ENCODE measurements at regions of chr6 and their contacts with region 1.

Region 1: DNA sequence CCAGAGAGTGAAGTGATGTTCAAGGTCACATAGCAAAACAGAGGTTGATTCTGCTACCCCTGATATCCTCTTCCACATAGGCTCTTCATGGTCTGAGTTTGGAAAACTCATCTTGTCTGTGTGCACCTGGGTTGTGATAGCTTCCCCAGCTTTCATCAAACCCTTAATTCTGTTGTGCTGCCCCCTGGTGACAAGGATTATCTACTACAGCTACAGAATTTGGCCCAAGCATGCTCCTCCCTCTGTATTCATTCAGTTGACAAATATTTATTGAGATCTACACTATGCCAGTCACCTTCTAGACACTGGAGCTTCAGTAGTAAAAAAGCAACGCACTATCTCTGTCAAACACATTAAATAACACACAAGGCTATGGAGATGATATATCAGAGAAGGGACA is 50.4 kb downstream of the SMPDL3A start:
- DNase-seq: peak; percentile 79
- H3K4me3 Mint-ChIP-seq: no peak overlapping the region
- H3K27ac Mint-ChIP-seq: no peak overlapping the region
- H3K4me1 Mint-ChIP-seq: peaks cover 7% of the 10 kb centered on the region
- H3K27me3 Mint-ChIP-seq: no peaks in the 10 kb centered on the region
- CTCF ChIP-seq: peak; percentile 54

Region 2: GRCh38 chr6:122372647-122373046 is 466.8 kb before region 1 on chr6:
- CTCF ChIA-PET with region 1: no interaction called
- POLR2A ChIA-PET with region 1: no interaction called
- intact Hi-C with region 1: no loop called
- DNase-seq: no peak
- H3K4me3 Mint-ChIP-seq: no peak overlapping the region
- H3K27ac Mint-ChIP-seq: no peak overlapping the region
- H3K4me1 Mint-ChIP-seq: peaks cover 9% of the 10 kb centered on the region
- H3K27me3 Mint-ChIP-seq: peaks cover 40% of the 10 kb centered on the region
- CTCF ChIP-seq: peak; percentile 32

Region 3: DNA sequence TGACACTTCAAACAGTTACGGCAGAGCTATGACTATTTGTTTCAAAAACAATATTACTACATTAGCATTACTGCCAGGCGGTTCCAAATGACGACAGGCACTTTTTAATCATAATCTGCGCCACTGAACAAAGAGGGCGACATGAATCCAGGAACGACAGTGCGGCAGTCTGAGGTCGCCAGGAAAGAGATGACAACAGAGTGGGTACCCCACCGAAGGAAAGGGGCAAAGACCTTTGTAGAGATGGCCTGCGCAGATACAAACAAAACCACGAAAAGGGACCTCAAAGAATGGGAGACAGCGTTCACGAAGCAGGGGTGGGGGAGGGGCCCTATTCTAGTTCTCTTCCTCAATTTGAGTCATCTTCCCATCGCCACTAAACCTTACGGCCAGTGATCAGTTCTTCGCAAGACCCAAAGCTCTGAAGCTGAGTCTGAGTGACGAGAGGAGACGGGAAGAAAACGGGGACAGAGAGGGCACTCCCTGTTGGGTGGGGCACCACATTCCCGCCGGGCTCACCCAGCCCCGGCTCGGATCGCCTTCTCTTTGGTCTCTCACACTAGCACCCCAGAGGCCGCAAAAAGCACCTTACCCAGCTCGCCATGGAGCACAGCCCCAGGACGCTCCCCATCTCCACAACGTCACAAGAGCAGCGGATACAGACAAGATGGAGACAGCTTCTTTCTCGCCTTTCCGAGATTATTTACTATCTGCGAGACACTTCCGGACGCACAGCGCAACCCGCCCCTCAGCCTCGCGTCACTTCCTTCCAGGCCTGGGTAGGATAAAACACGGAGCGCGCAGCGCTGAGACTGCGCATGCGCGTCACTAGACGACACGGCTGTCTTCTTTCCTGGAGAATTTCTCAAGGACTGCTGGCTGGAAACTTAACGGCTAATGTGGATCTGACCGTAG is 368.1 kb before region 1 on chr6 and contains the start of gene SERINC1:
- CTCF ChIA-PET with region 1: no interaction called
- POLR2A ChIA-PET with region 1: no interaction called
- intact Hi-C with region 1: loop called (anchors 5 kb)
- DNase-seq: peak; percentile 94
- H3K4me3 Mint-ChIP-seq: peak within 1 kb of the TSS; percentile 98
- H3K27ac Mint-ChIP-seq: peak within 1 kb of the TSS; percentile 100
- H3K4me1 Mint-ChIP-seq: peaks cover 26% of the 10 kb centered on the region
- H3K27me3 Mint-ChIP-seq: no peaks in the 10 kb centered on the region
- CTCF ChIP-seq: no peak
- total RNA-seq, gene SERINC1: 106 and 128 TPM in 2 replicates

Region 4: DNA sequence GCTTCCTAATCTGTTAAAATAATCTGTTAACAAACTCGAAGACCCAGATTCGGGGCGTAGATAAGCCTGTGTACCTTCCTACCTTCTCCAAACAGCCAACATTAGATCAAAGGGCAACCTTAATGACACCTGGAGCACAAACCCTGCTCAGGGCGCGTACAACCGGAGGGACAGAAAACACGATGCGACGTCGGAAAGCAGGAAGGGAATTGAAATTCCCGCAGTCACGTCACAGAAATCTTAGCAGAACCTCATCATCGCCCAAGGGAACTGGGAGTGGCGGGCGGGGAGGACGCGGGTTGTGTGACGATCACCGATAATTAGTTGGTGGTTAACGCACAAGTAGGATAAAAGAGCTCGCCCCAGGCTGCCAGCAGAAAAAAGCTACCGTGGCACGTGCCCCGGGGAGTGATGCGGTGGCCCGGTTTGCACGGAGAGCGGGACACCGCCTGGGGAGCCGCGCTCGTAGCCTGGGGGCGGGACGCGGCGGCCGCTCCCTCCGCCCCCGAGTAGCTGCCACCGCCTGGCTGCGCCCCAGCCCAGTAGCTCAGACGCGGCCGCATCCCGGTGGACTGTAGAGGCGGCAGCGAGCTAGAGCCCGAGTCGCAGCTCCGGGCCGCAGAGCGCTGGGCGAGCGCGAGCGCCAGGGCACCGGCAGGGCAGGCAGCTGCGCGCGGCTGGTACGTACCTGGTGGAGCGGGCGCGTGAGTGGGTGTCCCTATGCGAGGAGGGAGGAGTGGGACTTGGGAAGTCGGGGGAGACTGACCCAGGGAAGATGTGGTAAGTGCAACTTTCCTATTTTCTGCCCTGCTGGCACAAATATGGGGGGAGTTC is 229.4 kb before region 1 on chr6 and contains the start of gene PKIB:
- CTCF ChIA-PET with region 1: interaction called, 5 read pairs
- POLR2A ChIA-PET with region 1: no interaction called
- intact Hi-C with region 1: loop called (anchors 1 kb)
- DNase-seq: peak; percentile 80
- H3K4me3 Mint-ChIP-seq: peak within 1 kb of the TSS; percentile 85
- H3K27ac Mint-ChIP-seq: peak within 1 kb of the TSS; percentile 59
- H3K4me1 Mint-ChIP-seq: peaks cover 3% of the 10 kb centered on the region
- H3K27me3 Mint-ChIP-seq: no peaks in the 10 kb centered on the region
- CTCF ChIP-seq: peak; percentile 27
- total RNA-seq, gene PKIB: 3.1 and 6.0 TPM in 2 replicates

Region 5: DNA sequence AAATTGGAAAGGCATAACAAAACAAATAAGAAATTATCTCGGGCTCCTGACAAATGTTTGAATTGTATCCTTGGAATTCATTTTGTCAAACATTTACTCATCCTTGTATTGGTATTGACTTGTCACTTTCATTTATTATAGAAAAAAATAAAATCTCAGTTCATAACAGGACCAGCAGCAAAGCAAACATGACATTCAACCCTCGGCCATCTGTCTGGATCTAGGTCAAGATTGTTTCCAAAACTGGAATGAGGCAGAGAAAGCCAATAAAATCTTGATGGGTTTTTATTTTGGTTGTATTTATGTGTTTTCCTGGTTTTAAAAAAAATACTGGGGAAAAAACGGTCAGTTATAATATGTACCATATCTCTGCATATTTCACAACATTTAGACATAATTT is 102.9 kb before region 1 on chr6:
- CTCF ChIA-PET with region 1: interaction called, 238 read pairs
- POLR2A ChIA-PET with region 1: interaction called, 14 read pairs
- intact Hi-C with region 1: loop called (anchors 1 kb)
- DNase-seq: no peak
- H3K4me3 Mint-ChIP-seq: no peak overlapping the region
- H3K27ac Mint-ChIP-seq: peak overlapping the region; percentile 60
- H3K4me1 Mint-ChIP-seq: peaks cover 16% of the 10 kb centered on the region
- H3K27me3 Mint-ChIP-seq: no peaks in the 10 kb centered on the region
- CTCF ChIP-seq: no peak

Region 6: DNA sequence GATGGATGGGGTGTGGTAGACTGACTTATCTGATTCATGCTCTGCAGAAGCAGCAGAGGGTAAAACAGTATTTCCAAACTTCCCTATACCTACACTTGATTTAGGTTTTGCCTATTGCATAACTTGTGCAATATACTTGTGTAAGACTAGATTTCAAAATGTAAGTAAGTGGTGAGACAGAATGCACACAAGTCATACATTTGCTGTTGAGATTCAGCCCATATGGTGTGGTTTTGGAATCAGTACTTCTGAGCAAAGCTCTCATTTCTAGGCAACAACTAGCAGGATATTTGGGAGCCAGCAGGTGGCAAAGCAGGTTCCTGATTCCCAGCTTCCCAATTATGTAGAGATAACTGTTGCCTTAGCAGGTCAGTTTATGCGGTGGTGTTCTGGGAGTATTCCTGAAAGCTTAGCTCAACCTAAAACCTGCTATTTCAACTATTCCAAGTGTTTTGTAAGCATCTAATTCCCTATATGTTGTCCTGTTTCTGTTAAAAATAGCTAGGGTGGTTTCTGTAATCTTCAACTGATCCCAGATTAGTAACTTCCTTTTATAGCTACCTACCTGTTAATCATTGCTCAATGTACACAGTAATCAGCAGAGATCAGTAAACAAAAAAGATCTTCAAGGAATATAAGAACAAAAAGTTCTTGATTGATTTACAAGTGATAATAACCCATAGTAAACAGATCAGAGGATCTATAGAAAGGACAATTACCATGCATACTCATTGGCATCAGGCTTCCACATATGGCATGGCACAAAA is 68.5 kb before region 1 on chr6:
- CTCF ChIA-PET with region 1: interaction called, 28 read pairs
- POLR2A ChIA-PET with region 1: interaction called, 4 read pairs
- intact Hi-C with region 1: loop called (anchors 1 kb)
- DNase-seq: peak; percentile 44
- H3K4me3 Mint-ChIP-seq: no peak overlapping the region
- H3K27ac Mint-ChIP-seq: no peak overlapping the region
- H3K4me1 Mint-ChIP-seq: peaks cover 6% of the 10 kb centered on the region
- H3K27me3 Mint-ChIP-seq: no peaks in the 10 kb centered on the region
- CTCF ChIP-seq: peak; percentile 11

Region 7: GRCh38 chr6:122798099-122798641 is 41.3 kb before region 1 on chr6:
- CTCF ChIA-PET with region 1: interaction called, 30 read pairs
- POLR2A ChIA-PET with region 1: interaction called, 3 read pairs
- intact Hi-C with region 1: no loop called
- DNase-seq: peak; percentile 71
- H3K4me3 Mint-ChIP-seq: peak overlapping the region; percentile 32
- H3K27ac Mint-ChIP-seq: peak overlapping the region; percentile 69
- H3K4me1 Mint-ChIP-seq: peaks cover 14% of the 10 kb centered on the region
- H3K27me3 Mint-ChIP-seq: no peaks in the 10 kb centered on the region
- CTCF ChIP-seq: no peak

Region 8: GRCh38 chr6:122869437-122870024 is 30.1 kb after region 1 on chr6:
- CTCF ChIA-PET with region 1: interaction called, 10 read pairs
- POLR2A ChIA-PET with region 1: no interaction called
- intact Hi-C with region 1: no loop called
- DNase-seq: peak; percentile 79
- H3K4me3 Mint-ChIP-seq: no peak overlapping the region
- H3K27ac Mint-ChIP-seq: no peak overlapping the region
- H3K4me1 Mint-ChIP-seq: peaks cover 5% of the 10 kb centered on the region
- H3K27me3 Mint-ChIP-seq: peaks cover 18% of the 10 kb centered on the region
- CTCF ChIP-seq: peak; percentile 83

Region 9: GRCh38 chr6:122903266-122903915 is 63.9 kb after region 1 on chr6:
- CTCF ChIA-PET with region 1: no interaction called
- POLR2A ChIA-PET with region 1: no interaction called
- intact Hi-C with region 1: no loop called
- DNase-seq: no peak
- H3K4me3 Mint-ChIP-seq: no peak overlapping the region
- H3K27ac Mint-ChIP-seq: no peak overlapping the region
- H3K4me1 Mint-ChIP-seq: no peaks in the 10 kb centered on the region
- H3K27me3 Mint-ChIP-seq: no peaks in the 10 kb centered on the region
- CTCF ChIP-seq: no peak